ENCODE measurements at regions of chr11 and their contacts with region 1.

Region 1: DNA sequence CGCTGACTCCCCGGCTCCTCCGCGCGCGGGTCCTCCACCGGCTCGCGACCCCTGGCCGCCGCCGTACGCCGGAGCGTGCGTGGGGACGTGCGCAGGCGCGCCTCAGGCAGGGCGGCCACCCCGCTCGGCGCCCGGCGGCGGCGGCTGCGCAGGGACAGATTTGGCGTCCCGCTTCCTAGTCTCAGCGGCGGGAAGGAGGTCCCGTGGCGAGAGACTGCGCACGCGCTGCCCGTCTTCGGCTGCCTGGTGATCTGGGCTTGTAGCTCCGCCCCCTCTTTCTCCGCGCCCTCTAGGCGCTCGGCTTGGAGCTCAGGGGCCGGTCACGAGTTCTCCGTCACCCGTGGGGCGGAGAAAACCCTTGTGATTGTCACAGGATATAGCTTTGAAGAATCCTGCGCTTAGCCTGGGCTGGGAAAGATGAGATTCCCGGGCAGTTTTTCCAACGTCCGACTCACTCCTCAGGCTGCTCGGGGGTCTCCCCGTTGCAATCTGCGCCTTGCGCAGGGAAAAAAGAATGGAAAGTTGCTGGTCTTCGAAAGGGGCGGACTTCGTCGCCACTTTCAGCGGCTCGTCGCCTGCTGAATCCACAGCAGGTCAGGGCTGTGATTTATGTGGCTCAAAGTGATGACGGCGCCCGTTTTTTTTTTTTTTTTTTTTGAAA is at the start of gene PATL1:
- DNase-seq: peak; percentile 100
- H3K4me3 ChIP-seq: peak within 1 kb of the TSS; percentile 31 to 95 (median 83)
- H3K27ac ChIP-seq: peak within 1 kb of the TSS; percentile 94 to 99 (median 96)
- H3K4me1 ChIP-seq: peaks cover 5 to 16% of the 10 kb centered on the region in 2 donors
- H3K27me3 ChIP-seq: no peaks in the 10 kb centered on the region
- CTCF ChIP-seq: no peak
- POLR2A ChIP-seq: peak; percentile 44 to 95
- total RNA-seq, gene PATL1: 14.5 to 19.8 (median 17.0) TPM

Region 2: GRCh38 chr11:59534676-59535075 is 134.4 kb before region 1 on chr11:
- intact Hi-C with region 1: loop called (anchors 10 kb)
- DNase-seq: no peak
- H3K4me3 ChIP-seq: no peak overlapping the region
- H3K27ac ChIP-seq: no peak overlapping the region
- H3K4me1 ChIP-seq: no peaks in the 10 kb centered on the region
- H3K27me3 ChIP-seq: no peaks in the 10 kb centered on the region
- CTCF ChIP-seq: no peak
- POLR2A ChIP-seq: no peak

Region 3: GRCh38 chr11:59550368-59550841 is 118.7 kb before region 1 on chr11:
- intact Hi-C with region 1: loop called (anchors 10 kb)
- DNase-seq: peak; percentile 82 to 83
- H3K4me3 ChIP-seq: peak overlapping the region in 2 of 3 donors; percentile 34 to 69
- H3K27ac ChIP-seq: peak overlapping the region; percentile 87 to 90 (median 89)
- H3K4me1 ChIP-seq: peaks cover 0 to 5% of the 10 kb centered on the region in 2 donors
- H3K27me3 ChIP-seq: no peaks in the 10 kb centered on the region
- CTCF ChIP-seq: peak; percentile 9 to 60 (median 56)
- POLR2A ChIP-seq: no peak

Region 4: DNA sequence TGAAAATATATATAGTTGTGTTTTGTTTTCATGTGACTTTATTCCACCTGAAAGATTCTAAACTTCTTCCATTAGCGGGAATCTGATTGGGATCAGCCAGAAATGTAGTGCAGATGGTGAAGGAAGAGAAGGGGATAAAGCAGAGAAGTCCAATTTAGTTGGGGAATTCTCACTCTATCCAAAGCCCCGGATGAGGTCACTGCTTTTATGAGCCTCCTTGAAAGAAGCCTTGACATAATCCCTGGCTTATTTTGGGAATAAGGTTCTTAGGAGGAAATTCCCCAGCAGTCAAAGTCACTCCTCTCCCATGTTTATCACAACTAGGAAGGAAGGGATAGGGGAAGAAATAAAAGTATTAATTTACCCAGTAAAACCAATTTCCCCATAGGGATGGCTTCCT is 94.6 kb before region 1 on chr11:
- intact Hi-C with region 1: no loop called
- DNase-seq: no peak
- H3K4me3 ChIP-seq: no peak overlapping the region
- H3K27ac ChIP-seq: no peak overlapping the region
- H3K4me1 ChIP-seq: no peaks in the 10 kb centered on the region
- H3K27me3 ChIP-seq: no peaks in the 10 kb centered on the region
- CTCF ChIP-seq: no peak
- POLR2A ChIP-seq: no peak

Region 5: DNA sequence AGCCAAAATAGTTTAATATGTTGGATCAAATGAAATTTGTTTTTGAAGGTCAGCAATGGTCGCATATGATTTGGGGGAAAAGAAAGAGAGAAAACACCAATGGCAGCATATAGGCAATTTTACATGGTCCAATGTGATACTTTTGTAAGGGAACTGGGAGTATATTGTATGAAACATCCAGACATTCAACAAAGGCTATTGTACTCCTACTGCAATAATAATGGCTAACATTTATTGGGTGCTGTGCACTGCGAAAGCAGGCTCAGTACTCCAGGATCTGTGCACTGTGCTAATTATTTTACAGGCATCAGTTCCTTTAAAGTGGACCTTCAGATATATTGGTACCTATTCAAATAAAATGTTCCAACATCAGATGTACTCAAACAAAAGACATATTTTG is 50.5 kb after region 1 on chr11:
- intact Hi-C with region 1: no loop called
- DNase-seq: no peak
- H3K4me3 ChIP-seq: no peak overlapping the region
- H3K27ac ChIP-seq: no peak overlapping the region
- H3K4me1 ChIP-seq: no peaks in the 10 kb centered on the region
- H3K27me3 ChIP-seq: no peaks in the 10 kb centered on the region
- CTCF ChIP-seq: no peak
- POLR2A ChIP-seq: no peak